ENCODE measurements at regions of chr11 and their contacts with region 1.

Region 1: GRCh38 chr11:115222218-115222862 is 281.9 kb downstream of the CADM1 start:
- DNase-seq: peak; percentile 60
- ATAC-seq: peak; percentile 93
- H3K4me3 Mint-ChIP-seq: no peak overlapping the region
- H3K27ac Mint-ChIP-seq: peak overlapping the region; percentile 4
- H3K4me1 Mint-ChIP-seq: peaks cover 15% of the 10 kb centered on the region
- H3K27me3 Mint-ChIP-seq: peaks cover 12% of the 10 kb centered on the region

Region 2: DNA sequence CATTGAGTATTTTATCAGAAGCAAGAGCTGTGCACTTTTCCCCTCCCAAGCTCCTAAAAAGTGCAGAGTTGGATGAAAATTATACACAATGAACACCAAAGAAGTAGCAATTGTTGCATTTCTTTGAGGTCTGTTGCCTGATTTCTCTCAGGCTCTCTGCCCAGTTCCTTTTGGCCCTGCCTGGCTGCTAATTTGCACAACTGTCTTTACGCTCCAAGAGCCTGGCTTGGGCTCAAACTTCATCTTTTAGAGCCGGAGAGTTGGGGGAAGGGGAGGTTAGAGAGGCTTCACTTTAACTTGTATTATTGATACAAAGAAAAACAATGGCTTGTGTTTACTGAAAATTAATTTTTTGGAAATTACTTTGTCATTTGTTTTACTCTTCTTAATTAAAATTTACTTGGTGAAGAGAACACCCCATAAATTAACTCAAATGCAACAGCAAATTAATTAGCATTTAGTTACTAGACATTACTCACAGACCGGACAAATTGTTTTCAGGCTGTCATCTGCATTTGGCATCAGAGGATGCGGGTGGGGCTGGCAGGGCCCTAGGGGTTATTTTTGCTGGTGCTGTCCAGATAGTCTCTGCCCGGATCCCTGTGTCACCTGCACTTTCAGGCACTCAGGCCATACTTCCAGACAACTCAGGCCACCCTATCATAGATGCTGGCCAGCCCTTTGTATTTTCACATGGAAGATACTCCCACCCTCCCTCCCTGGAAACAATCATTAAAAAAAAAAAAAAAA is 136.7 kb before region 1 on chr11:
- CTCF ChIA-PET with region 1: no interaction called
- POLR2A ChIA-PET with region 1: no interaction called
- intact Hi-C with region 1: no loop called
- DNase-seq: no peak
- ATAC-seq: no peak
- H3K4me3 Mint-ChIP-seq: no peak overlapping the region
- H3K27ac Mint-ChIP-seq: no peak overlapping the region
- H3K4me1 Mint-ChIP-seq: no peaks in the 10 kb centered on the region
- H3K27me3 Mint-ChIP-seq: no peaks in the 10 kb centered on the region

Region 3: GRCh38 chr11:115193914-115194801 is 28.2 kb before region 1 on chr11:
- CTCF ChIA-PET with region 1: interaction called, 3 read pairs
- POLR2A ChIA-PET with region 1: no interaction called
- intact Hi-C with region 1: loop called (anchors 1 kb)
- DNase-seq: no peak
- ATAC-seq: peak; percentile 72
- H3K4me3 Mint-ChIP-seq: peak overlapping the region; percentile 2
- H3K27ac Mint-ChIP-seq: no peak overlapping the region
- H3K4me1 Mint-ChIP-seq: peaks cover 4% of the 10 kb centered on the region
- H3K27me3 Mint-ChIP-seq: peaks cover 2% of the 10 kb centered on the region

Region 4: GRCh38 chr11:115256397-115257197 is 34.3 kb after region 1 on chr11:
- CTCF ChIA-PET with region 1: no interaction called
- POLR2A ChIA-PET with region 1: no interaction called
- intact Hi-C with region 1: no loop called
- DNase-seq: no peak
- ATAC-seq: no peak
- H3K4me3 Mint-ChIP-seq: no peak overlapping the region
- H3K27ac Mint-ChIP-seq: no peak overlapping the region
- H3K4me1 Mint-ChIP-seq: no peaks in the 10 kb centered on the region
- H3K27me3 Mint-ChIP-seq: peaks cover 6% of the 10 kb centered on the region

Region 5: DNA sequence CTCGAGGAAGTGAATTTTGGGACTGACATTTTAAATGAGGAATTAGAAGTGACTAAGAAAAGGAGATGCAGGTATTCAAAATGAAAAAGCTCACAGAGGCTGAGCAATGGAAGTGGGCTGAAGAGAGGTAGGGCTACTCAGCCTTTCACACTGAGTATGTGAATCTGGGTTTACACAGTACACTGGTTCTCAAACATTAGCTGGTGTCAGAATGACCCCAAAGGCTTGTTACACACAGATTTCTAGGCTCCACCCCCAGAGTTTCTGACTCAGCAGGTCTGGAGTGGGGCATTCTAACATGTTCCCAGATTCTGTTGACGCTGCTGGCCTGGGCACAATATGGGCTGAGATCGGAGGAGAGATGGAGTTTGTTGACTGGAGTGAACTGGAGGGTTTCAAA is 249.0 kb after region 1 on chr11:
- CTCF ChIA-PET with region 1: no interaction called
- POLR2A ChIA-PET with region 1: no interaction called
- intact Hi-C with region 1: no loop called
- DNase-seq: peak; percentile 3
- ATAC-seq: peak; percentile 39
- H3K4me3 Mint-ChIP-seq: no peak overlapping the region
- H3K27ac Mint-ChIP-seq: no peak overlapping the region
- H3K4me1 Mint-ChIP-seq: no peaks in the 10 kb centered on the region
- H3K27me3 Mint-ChIP-seq: peaks cover 10% of the 10 kb centered on the region

Region 6: GRCh38 chr11:115792903-115793302 is 570.6 kb after region 1 on chr11:
- CTCF ChIA-PET with region 1: no interaction called
- POLR2A ChIA-PET with region 1: no interaction called
- intact Hi-C with region 1: no loop called
- DNase-seq: no peak
- ATAC-seq: no peak
- H3K4me3 Mint-ChIP-seq: no peak overlapping the region
- H3K27ac Mint-ChIP-seq: no peak overlapping the region
- H3K4me1 Mint-ChIP-seq: no peaks in the 10 kb centered on the region
- H3K27me3 Mint-ChIP-seq: peaks cover 3% of the 10 kb centered on the region

Measured in activated CD4-positive, alpha-beta T cell treated with anti-CD3 and anti-CD28 coated beads for 36 hours (primary cell).